ENCODE measurements at regions of chr3 and their contacts with region 1.

Region 1: DNA sequence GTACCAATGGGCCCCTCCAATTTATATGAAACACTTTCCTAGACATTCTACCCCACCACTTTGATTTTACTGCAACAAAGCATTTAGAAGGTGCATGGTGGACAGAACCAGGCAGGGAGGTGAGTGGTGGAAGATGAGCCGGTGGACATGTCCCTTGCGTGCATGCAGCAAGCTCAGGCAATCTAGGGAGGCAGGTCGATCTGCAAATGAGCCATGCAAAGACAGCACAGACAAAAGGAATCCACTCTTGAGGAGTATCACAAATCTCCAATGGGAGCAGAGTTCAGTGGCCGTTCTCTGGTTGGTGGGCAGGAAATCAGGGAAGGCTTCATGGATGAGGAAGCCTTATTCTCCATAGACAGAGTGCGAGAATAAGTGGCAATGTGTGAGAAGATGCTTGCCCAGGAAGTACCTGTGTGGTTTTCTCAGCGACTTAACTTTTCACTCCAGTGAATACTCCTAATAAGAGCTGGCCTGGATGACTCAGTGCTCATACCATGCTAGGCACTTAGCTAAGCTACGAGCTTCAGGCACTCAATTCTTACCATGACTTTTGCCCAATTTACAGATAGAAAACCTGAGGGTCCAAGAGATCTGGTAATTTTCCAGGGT is 152.5 kb downstream of the FOXP1 start:
- DNase-seq: no peak
- ATAC-seq: no peak
- H3K4me3 ChIP-seq: no peak overlapping the region
- H3K27ac ChIP-seq: no peak overlapping the region
- H3K4me1 ChIP-seq: peaks cover 0 to 5% of the 10 kb centered on the region in 2 donors
- H3K27me3 ChIP-seq: no peaks in the 10 kb centered on the region

Region 2: DNA sequence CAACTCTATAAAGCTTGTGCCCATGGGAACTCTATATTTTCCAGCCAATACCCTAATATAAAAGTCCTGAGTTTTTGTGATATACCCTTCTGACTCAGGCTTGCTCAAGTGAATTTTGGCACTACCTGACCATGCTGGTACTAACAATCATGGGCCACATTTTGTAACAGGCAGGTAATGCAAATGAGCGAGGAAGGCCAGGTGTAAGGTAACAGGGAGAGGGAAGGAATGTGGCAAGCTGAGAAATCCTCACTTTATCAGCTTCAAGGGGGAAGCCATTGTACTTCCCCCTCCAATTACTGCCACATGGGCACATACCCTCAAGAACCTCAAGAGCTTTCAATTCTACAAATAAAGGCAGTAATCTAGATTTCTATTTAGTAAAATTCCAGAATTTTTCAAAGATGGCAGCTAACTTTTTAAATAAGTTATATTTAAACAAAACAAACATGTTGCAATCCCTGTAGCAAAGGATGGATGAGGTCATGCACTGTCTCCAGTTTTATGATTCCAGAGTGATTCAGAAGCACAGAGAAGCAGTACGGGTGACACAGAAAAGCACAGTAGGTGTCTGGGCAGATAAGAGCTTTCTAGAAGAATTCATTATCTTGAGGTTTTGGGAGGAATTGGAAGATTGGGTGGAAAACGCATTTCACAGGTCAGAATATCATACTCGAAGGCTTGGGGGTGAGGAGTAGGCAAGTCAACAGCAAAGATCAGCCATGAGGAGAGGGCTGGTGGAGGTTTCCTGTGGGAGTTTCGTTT is 64.8 kb after region 1 on chr3:
- intact Hi-C with region 1: loop called in 1 of 2 experiments (anchors 10 kb)
- DNase-seq: no peak
- ATAC-seq: peak; percentile 69
- H3K4me3 ChIP-seq: no peak overlapping the region
- H3K27ac ChIP-seq: peak overlapping the region; percentile 70 to 91
- H3K4me1 ChIP-seq: peaks cover 4 to 11% of the 10 kb centered on the region in 2 donors
- H3K27me3 ChIP-seq: no peaks in the 10 kb centered on the region